PC-9 (cell line): ENCODE measurements at regions of chr15 and their contacts with region 1.

Region 1: GRCh38 chr15:42984493-42985034 is 64.0 kb upstream of the TTBK2 start:
- DNase-seq: no peak
- H3K4me3 ChIP-seq: no peak overlapping the region
- H3K27ac ChIP-seq: no peak overlapping the region
- H3K4me1 ChIP-seq: no peaks in the 10 kb centered on the region
- H3K27me3 ChIP-seq: no peaks in the 10 kb centered on the region
- CTCF ChIP-seq: no peak

Region 2: GRCh38 chr15:42920519-42921227 is 63.9 kb before region 1 on chr15 and contains the start of gene TTBK2:
- CTCF ChIA-PET with region 1: no interaction called
- POLR2A ChIA-PET with region 1: no interaction called
- intact Hi-C with region 1: no loop called
- DNase-seq: peak; percentile 88 to 97
- H3K4me3 ChIP-seq: peak within 1 kb of the TSS; percentile 69
- H3K27ac ChIP-seq: no peak within 1 kb of the TSS
- H3K4me1 ChIP-seq: peaks cover 15% of the 10 kb centered on the region; the same call in 1 of the 2 replicates
- H3K27me3 ChIP-seq: no peaks in the 10 kb centered on the region
- CTCF ChIP-seq: no peak
- total RNA-seq, gene TTBK2: 22.6 and 24.7 TPM in 2 replicates

Region 3: GRCh38 chr15:43273243-43273642 is 288.7 kb after region 1 on chr15:
- CTCF ChIA-PET with region 1: interaction called, 11 read pairs
- POLR2A ChIA-PET with region 1: no interaction called
- intact Hi-C with region 1: no loop called
- DNase-seq: no peak
- H3K4me3 ChIP-seq: no peak overlapping the region
- H3K27ac ChIP-seq: peak overlapping the region; percentile 53; the same call in 1 of the 2 replicates
- H3K4me1 ChIP-seq: peaks cover 6% of the 10 kb centered on the region; the same call in 1 of the 2 replicates
- H3K27me3 ChIP-seq: no peaks in the 10 kb centered on the region
- CTCF ChIP-seq: no peak

Region 4: DNA sequence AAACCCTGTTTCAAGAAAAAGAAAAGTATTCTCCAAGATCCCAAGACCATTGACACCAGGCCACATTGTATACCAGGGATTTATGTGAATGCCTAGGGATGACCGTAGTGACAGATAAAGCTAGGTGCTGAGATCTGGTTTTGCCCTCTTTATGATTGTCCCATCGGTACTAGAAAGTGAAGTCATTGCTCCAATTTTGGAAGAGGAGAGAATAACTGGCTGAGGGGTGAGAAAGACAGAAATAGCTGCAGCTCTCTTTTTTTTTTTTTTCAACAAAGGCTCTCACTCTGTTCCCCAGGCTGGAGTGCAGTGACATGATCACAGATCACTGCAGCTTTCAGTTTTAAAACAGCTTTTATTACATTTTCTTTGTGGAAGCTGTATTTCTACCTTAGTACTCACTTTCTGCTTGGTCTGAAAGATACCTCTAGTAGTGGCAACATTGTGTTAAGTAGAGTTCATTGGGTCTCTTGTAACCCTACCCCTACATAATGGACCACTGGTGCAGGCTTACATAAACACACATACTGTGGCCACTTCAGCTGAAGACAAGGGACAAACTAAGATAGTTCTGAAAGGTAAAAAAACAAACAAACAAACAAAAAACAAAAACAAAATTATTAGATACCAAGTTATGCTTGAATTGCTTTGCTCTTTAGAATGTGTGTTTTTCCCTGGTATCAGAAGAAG is 368.3 kb after region 1 on chr15:
- CTCF ChIA-PET with region 1: no interaction called
- POLR2A ChIA-PET with region 1: no interaction called
- intact Hi-C with region 1: no loop called
- DNase-seq: no peak
- H3K4me3 ChIP-seq: no peak overlapping the region
- H3K27ac ChIP-seq: no peak overlapping the region
- H3K4me1 ChIP-seq: no peaks in the 10 kb centered on the region
- H3K27me3 ChIP-seq: no peaks in the 10 kb centered on the region
- CTCF ChIP-seq: no peak